ENCODE measurements at regions of chr3 and their contacts with region 1.

Region 1: GRCh38 chr3:117987256-117987655 is 1047.4 kb downstream of the IGSF11 start:
- DNase-seq: no peak
- H3K27ac ChIP-seq: no peak overlapping the region
- CTCF ChIP-seq: no peak

Region 2: GRCh38 chr3:117997201-117998049 is 10.2 kb after region 1 on chr3:
- CTCF ChIA-PET with region 1: interaction called, 11 read pairs
- POLR2A ChIA-PET with region 1: no interaction called
- DNase-seq: peak; percentile 60
- H3K27ac ChIP-seq: no peak overlapping the region
- CTCF ChIP-seq: peak; percentile 91